Sciatic nerve (tissue), 2 donors: ENCODE measurements at regions of chr12 and their contacts with region 1.

Region 1: DNA sequence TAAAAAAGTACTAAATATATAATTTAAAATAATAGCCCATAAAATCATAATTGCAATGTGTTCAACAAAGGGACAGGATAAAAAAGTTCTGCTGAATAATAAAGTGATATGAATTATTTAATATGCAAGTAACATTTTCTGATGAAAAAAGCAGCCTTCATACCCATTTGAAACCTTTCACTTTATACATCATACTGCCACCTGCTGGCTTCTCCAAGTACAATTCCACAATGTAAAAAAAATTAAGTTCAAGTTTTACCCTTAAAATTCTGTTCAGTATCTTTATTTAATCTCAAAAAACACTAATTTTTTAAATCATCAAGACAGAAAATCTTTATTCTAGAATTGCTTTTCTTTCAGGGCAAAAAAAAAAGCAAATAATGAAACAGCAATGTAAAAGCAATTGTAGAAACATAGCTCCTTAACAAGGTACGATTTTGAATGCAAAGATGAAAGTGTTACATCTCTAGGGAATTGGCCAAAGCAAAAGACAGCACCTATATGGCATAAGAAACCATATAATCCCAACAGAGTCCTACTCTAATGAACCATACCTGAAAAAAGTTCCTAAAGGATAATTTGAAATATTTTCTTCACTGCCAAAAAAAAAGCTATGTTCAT is 15.0 kb downstream of the MDM1 start:
- DNase-seq: no peak
- ATAC-seq: peak; percentile 49

Region 2: DNA sequence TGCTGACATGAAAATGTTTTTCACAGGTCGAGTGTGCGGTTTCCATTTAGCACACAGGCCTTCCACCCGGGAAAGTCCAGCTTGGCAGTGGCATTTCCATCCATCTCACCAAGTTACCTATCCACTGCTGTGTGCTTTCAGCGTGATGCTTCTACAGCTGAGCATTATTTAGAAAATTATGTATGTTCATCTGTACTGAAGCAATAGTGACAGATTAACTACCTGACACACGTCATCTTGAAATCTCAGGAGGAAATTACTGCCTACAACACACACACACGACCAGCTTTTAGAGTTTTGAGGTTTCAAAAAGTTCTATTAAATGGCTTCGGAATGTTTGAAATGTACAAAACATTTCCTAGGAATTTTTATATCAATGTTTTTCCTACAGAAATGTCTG is 288.5 kb before region 1 on chr12:
- intact Hi-C with region 1: loop called (anchors 10 kb)
- DNase-seq: no peak
- ATAC-seq: no peak

Region 3: GRCh38 chr12:68240597-68241374 is 76.4 kb before region 1 on chr12:
- intact Hi-C with region 1: loop called (anchors 10 kb)
- DNase-seq: no peak
- ATAC-seq: peak; percentile 91

Region 4: DNA sequence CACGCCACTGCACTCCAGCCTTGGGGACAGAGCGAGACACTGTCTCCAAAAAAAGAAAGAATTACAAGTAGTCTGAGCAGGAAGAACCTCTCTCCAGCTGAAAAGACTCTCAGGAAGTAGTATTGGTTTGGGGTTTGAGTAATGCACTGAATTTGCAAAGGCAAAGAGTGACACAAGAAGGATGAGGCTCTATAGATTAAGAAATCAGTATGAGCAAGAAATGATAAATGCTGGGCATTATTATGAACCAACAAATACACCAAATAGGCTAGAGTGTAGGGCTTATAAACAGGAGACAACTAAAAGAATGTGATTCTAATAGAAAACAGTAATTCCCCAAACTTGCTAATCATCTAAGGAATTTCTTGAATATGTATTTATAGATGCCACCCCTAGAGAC is 426.2 kb after region 1 on chr12:
- intact Hi-C with region 1: no loop called
- DNase-seq: no peak
- ATAC-seq: no peak